A673 (cell line): ENCODE measurements at regions of chr20 and their contacts with region 1.

Region 1: GRCh38 chr20:32091888-32092346 is 17.6 kb upstream of the TM9SF4 start:
- DNase-seq: peak; percentile 85
- H3K4me3 ChIP-seq: no peak overlapping the region
- H3K27ac ChIP-seq: no peak overlapping the region
- H3K4me1 ChIP-seq: no peaks in the 10 kb centered on the region
- H3K27me3 ChIP-seq: no peaks in the 10 kb centered on the region
- CTCF ChIP-seq: peak; percentile 96

Region 2: DNA sequence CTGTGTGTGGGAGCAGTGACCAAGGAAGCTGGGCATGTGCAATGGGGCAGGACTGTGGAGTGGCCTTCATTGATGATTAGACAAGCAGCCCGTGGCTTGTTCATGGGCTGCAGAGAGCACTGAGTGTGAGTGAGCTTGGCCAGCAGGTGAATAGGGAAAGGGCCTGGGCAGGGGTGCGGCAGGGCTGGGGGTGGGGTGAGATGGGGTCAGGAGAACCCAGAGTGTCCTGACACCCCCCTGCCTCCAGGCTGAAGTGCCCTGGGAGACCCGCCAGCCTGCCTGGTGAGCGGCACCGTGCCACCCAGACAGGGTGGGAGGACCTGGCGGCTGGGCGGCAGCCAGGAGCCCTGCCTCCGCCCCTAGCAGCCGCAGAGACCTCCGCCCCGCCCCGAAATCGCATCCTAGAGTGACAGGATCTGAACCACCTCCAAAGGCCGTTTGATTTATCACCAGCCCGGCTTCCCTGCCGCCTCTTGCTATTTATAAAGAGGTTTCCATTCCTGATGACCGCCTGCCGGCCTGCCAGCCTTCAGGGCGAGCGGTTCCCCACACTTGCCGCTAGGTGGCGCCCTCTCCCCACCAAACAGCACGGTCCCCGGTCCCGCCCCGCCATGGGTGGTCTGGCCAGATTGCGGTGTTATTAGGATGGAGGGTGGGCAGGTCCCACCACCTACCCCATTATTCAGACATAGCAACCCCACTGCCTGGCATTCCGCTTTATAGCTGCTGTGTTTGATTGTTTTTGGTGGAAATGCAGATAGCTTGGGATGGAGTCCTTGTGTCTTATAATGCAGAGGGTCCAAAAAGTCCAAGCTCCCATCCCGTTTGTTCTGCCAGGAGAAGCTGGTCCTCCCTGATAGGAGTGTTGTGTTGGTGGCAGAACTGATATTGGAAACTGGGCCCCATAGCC is 269.2 kb before region 1 on chr20:
- CTCF ChIA-PET with region 1: interaction called, 4 read pairs
- POLR2A ChIA-PET with region 1: no interaction called
- intact Hi-C with region 1: loop called (anchors 2 kb)
- DNase-seq: peak; percentile 77
- H3K4me3 ChIP-seq: no peak overlapping the region
- H3K27ac ChIP-seq: no peak overlapping the region
- H3K4me1 ChIP-seq: peaks cover 9% of the 10 kb centered on the region
- H3K27me3 ChIP-seq: no peaks in the 10 kb centered on the region
- CTCF ChIP-seq: peak; percentile 99

Region 3: DNA sequence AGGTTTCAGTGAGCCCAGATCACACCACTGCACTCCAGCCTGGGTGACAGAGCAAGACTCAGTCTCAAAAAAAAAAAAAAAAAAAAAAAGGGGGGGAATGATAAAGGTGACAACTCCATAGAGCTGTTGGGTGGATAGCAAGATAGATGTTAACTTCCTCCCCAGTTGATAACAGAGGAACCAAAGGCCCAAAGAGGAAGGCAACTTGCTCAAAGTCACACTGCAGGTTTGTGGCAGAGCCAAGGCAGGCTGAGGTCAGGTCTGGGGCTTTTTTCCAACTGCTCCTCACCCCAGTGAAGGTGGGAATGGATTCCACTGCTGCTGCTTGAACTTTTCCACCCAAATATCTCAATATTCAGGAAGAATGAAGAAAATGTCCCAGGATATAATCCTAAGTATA is 13.1 kb before region 1 on chr20:
- CTCF ChIA-PET with region 1: interaction called, 13 read pairs
- POLR2A ChIA-PET with region 1: no interaction called
- intact Hi-C with region 1: no loop called
- DNase-seq: no peak
- H3K4me3 ChIP-seq: no peak overlapping the region
- H3K27ac ChIP-seq: no peak overlapping the region
- H3K4me1 ChIP-seq: no peaks in the 10 kb centered on the region
- H3K27me3 ChIP-seq: peaks cover 48% of the 10 kb centered on the region
- CTCF ChIP-seq: no peak